ENCODE measurements at regions of chr5 and their contacts with region 1.

Region 1: DNA sequence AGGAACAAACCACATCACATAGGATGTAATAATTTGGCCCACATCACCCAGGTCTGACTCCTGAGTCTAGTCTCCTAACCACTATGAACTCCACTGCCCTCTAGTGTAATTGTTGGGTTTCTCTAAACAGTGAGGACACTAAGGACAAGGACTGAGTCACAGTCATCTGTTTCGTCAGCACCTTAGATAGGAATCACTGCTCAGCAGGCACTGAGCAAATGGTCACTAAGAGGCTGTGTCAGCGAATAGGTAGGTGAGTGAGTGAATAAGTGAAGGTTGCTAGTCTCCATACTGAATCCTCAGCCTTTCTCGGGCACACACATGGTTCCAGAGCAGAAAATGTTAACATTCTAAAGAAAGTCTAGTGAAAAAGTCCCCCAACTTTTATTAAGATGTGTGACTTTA is 278.6 kb downstream of the SPOCK1 start:
- DNase-seq: peak; percentile 93
- ATAC-seq: peak; percentile 82
- H3K4me3 ChIP-seq: no peak overlapping the region
- H3K27ac ChIP-seq: no peak overlapping the region
- H3K4me1 ChIP-seq: peaks cover 38% of the 10 kb centered on the region
- H3K27me3 ChIP-seq: no peaks in the 10 kb centered on the region
- CTCF ChIP-seq: peak; percentile 76

Region 2: DNA sequence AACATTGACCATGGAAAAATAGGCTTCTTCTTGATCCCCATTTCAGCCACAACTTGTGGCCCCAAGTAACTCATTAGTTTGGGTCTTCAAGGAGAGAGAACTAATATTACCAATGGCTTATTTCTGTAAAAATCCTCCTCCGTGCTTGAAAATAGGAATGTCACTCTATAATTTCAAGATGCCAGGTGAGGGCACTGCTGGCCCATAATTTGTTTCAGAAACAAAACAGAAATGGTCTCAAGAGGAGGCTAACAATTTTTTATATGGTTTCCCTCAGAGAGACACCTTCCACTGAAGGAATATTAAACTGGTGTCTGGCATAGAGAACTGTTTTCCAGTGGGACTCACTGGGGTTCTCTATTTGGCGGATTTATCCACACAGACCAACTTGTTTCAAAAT is 418.1 kb before region 1 on chr5:
- CTCF ChIA-PET with region 1: no interaction called
- POLR2A ChIA-PET with region 1: no interaction called
- intact Hi-C with region 1: loop called (anchors 2 kb)
- DNase-seq: peak; percentile 56
- ATAC-seq: no peak
- H3K4me3 ChIP-seq: no peak overlapping the region
- H3K27ac ChIP-seq: no peak overlapping the region
- H3K4me1 ChIP-seq: peaks cover 8% of the 10 kb centered on the region; the same call in 1 of the 2 replicates
- H3K27me3 ChIP-seq: no peaks in the 10 kb centered on the region
- CTCF ChIP-seq: peak; percentile 66

Region 3: DNA sequence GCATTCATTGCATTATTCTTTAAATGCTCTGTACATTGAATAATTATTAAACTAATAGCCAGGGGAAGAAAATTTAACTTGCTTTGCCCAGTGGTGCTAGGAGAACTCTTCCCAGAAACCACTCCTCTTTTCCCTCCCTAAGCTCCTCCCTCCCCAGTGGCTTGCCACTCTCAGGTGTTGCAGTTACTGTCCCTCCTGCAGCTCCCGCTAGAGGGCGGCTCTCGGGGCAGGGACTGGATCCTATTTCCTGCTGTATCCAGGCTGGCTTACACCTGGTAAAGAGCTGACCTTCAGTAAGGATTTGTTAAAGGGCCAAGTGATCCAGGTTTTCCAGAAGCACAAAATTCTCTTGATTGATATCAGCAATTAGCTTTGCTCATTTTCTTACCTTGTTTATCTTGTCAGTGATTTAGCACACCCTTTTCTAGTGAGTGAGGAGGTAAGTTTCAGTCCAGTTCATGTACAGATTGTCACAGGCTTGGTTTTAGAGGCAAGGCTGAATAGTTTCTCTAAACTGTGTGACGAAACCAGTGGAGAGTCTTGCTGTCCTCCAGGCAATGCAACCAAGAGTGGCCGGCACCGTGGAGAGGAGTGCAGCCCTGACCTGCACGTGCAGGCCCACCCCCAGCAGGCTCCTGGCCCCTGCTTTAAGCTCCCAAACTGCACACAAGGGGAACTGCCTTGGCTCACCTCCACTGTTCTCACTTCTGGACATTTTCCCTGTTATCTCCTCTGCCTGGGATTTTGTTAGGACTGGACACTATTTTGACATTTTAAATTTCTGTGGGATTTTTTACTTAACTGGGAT is 145.2 kb before region 1 on chr5:
- CTCF ChIA-PET with region 1: interaction called, 3 read pairs
- POLR2A ChIA-PET with region 1: no interaction called
- intact Hi-C with region 1: loop called (anchors 1 kb)
- DNase-seq: peak; percentile 84
- ATAC-seq: peak; percentile 73
- H3K4me3 ChIP-seq: no peak overlapping the region
- H3K27ac ChIP-seq: no peak overlapping the region
- H3K4me1 ChIP-seq: peaks cover 39% of the 10 kb centered on the region
- H3K27me3 ChIP-seq: no peaks in the 10 kb centered on the region
- CTCF ChIP-seq: peak; percentile 79

Region 4: DNA sequence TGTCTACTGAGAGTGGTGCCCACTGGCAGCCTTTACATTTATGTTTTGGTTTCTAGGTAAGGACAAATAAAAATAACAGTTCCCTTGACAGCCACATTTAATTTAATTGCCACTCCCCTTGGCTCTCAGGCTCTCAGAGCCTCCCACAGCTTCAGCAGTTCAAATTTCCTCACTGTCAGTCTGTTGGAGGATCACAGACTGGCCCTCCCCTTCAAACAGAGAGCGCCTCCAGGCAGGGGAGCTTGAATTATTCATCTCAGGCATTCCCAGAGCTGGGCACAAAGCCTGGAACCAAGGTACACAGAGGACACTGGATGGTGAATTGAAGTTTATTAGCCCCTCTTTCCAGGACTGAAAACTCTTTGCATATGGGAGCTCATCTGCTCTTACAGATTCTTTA is 129.1 kb before region 1 on chr5:
- CTCF ChIA-PET with region 1: no interaction called
- POLR2A ChIA-PET with region 1: no interaction called
- intact Hi-C with region 1: loop called (anchors 5 kb)
- DNase-seq: peak; percentile 15
- ATAC-seq: peak; percentile 38
- H3K4me3 ChIP-seq: no peak overlapping the region
- H3K27ac ChIP-seq: no peak overlapping the region
- H3K4me1 ChIP-seq: peaks cover 4% of the 10 kb centered on the region; the same call in 1 of the 2 replicates
- H3K27me3 ChIP-seq: no peaks in the 10 kb centered on the region
- CTCF ChIP-seq: no peak

Region 5: GRCh38 chr5:137146402-137146890 is 74.1 kb before region 1 on chr5:
- CTCF ChIA-PET with region 1: no interaction called
- POLR2A ChIA-PET with region 1: no interaction called
- intact Hi-C with region 1: loop called (anchors 2 kb)
- DNase-seq: peak; percentile 74
- ATAC-seq: peak; percentile 71
- H3K4me3 ChIP-seq: no peak overlapping the region
- H3K27ac ChIP-seq: peak overlapping the region; percentile 54
- H3K4me1 ChIP-seq: peaks cover 52% of the 10 kb centered on the region
- H3K27me3 ChIP-seq: no peaks in the 10 kb centered on the region
- CTCF ChIP-seq: no peak

Region 6: DNA sequence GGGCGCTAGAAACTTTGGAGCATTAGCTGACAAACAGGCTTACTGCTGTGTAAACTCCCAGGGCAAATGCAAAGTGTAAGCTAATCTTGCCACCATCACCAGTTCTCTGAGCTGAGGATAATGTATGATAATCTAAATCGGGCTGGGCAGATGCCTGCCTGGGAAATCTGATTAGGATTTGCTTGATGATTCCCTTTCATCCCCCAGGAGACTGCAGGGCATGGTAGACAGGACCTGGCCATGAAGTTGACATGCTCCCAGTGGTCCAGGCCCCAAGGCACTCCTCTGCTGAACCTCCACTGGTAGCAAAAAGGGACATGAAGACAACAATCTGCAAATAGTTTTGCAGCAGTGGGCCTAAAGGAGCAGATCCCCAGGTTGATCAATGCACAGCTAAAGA is 38.9 kb before region 1 on chr5:
- CTCF ChIA-PET with region 1: no interaction called
- POLR2A ChIA-PET with region 1: no interaction called
- intact Hi-C with region 1: no loop called
- DNase-seq: no peak
- ATAC-seq: no peak
- H3K4me3 ChIP-seq: no peak overlapping the region
- H3K27ac ChIP-seq: no peak overlapping the region
- H3K4me1 ChIP-seq: no peaks in the 10 kb centered on the region
- H3K27me3 ChIP-seq: no peaks in the 10 kb centered on the region
- CTCF ChIP-seq: no peak

Region 7: DNA sequence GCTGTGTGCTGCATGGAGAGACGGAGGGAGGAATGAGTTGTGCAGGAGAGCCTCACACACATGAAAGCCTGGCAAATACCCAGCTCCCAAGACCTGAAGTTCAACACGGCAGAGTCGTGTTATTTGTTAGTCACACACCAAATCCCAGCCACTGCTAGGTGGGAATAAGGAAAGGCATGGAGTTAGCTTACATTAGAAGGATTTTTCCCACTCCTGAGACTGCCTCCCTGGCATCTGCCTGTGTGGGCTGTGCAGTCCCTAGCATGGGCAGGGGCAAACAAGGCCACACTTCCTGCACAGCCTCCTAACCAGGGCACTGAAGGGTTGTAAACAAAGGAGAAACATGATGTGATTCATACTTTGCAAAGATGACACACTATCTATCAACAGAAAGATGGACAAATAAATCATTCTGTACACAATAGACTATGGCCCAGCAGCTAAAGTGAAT is 28.2 kb before region 1 on chr5:
- CTCF ChIA-PET with region 1: no interaction called
- POLR2A ChIA-PET with region 1: no interaction called
- intact Hi-C with region 1: loop called (anchors 1 kb)
- DNase-seq: peak; percentile 86
- ATAC-seq: peak; percentile 90
- H3K4me3 ChIP-seq: no peak overlapping the region
- H3K27ac ChIP-seq: peak overlapping the region; percentile 87
- H3K4me1 ChIP-seq: peaks cover 52% of the 10 kb centered on the region
- H3K27me3 ChIP-seq: no peaks in the 10 kb centered on the region
- CTCF ChIP-seq: no peak

Region 8: DNA sequence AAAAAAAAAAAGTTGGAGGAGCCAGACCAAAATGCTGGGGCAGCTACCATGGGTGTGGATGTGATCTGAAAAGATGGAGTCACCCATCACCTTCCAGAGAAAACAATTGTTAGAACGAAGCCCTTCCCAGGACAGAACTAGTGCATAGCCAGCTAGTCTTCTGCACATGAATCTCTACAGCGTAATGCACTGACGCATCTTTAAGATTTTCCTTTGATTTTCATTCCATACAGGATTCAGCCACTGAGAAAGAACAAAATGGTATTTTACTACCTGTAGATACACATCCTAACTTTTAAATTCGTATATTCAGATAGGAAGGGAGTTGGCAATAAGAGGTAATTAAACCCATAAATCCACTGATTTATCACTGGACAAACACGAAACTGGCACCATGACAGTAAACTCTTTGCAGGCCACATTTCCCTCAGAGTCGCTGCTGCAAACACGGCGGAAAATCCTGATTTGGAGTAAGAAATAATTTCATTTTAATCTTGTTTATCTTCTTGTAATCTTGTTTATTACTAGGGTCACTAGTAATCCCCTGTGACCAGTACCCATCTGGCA is 72.0 kb after region 1 on chr5:
- CTCF ChIA-PET with region 1: no interaction called
- POLR2A ChIA-PET with region 1: no interaction called
- intact Hi-C with region 1: loop called (anchors 2 kb)
- DNase-seq: peak; percentile 86
- ATAC-seq: peak; percentile 69
- H3K4me3 ChIP-seq: peak overlapping the region; percentile 9; the same call in 1 of the 2 replicates
- H3K27ac ChIP-seq: peak overlapping the region; percentile 97
- H3K4me1 ChIP-seq: peaks cover 51% of the 10 kb centered on the region
- H3K27me3 ChIP-seq: no peaks in the 10 kb centered on the region
- CTCF ChIP-seq: no peak